Activated T-helper 2 cell treated with anti-CD3 and anti-CD28 coated beads, Interferon-gamma antibody, Interleukin-2, Interleukin-4, amounts not matched to agents 10 μg/mL and 5 μg/mL and 100 μg/mL, durations not matched to agents 14 hours and 24 hours and 36 hours (primary cell): ENCODE measurements at regions of chr6 and their contacts with region 1.

Region 1: GRCh38 chr6:158026054-158026900 is 44.6 kb downstream of the SYNJ2 start:
- DNase-seq: peak; percentile 71
- H3K4me3 Mint-ChIP-seq: peak overlapping the region; percentile 74
- H3K27ac Mint-ChIP-seq: peak overlapping the region; percentile 99
- H3K4me1 Mint-ChIP-seq: peaks cover 28% of the 10 kb centered on the region
- H3K27me3 Mint-ChIP-seq: no peaks in the 10 kb centered on the region

Region 2: DNA sequence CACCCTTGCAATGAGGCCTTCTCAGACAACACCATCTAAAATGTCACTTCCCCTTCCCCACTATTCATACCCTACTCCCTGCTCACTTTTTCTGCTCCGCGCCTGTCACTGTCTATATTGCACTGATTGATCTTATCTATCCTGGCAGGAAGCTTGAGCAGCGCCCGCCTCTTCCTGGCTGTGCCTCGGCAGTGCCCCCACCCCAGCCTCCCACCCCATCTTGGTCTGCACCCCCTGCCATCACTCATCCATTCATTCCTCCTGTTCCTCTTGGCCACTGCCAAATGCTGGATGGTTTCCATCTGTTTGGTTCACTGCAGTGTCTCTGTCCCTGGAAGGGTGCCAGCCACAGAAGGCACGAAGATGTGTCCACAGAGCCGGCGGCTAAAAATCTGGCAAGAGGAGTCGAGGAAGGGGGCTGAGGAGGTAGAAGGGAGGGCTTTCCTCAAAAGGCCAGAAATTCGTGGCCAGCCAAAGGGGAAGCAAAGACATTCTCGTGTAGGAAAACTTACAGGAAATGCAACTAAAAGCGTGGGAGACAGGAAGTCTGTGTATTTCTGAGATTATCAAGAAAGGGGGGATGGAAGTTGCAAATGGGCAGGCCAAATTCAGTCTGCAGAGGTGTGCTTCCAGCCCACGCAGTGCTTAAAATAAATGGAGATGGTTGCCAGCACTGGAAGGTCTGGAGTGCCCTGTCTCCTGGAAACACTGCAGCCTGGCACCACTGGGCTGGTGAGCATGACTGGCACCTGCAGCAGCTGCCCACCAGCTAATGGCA is 17.0 kb before region 1 on chr6:
- intact Hi-C with region 1: loop called (anchors 2 kb)
- DNase-seq: no peak
- H3K4me3 Mint-ChIP-seq: peak overlapping the region; percentile 20
- H3K27ac Mint-ChIP-seq: peak overlapping the region; percentile 61
- H3K4me1 Mint-ChIP-seq: peaks cover 56% of the 10 kb centered on the region
- H3K27me3 Mint-ChIP-seq: no peaks in the 10 kb centered on the region

Region 3: DNA sequence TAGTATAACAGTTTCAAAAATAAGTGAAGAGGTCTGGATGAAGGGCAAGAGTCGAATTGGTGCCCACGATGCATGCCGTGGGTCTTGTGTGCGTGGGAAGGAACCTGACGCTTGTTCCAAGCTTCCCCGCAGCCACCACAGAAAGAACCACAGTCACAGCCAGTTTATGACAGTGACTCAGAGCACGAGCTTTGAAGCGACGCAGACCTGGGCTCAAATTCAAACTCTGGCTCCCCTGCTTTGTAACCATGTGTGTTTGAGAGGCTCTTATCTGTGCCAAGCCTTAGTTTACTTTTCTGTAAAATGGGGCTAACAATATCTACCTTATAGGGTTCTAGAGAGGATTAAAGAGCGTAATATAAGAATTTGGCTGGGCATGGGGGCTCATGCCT is 20.8 kb after region 1 on chr6:
- intact Hi-C with region 1: loop called (anchors 2 kb)
- DNase-seq: peak; percentile 40
- H3K4me3 Mint-ChIP-seq: peak overlapping the region; percentile 34
- H3K27ac Mint-ChIP-seq: peak overlapping the region; percentile 84
- H3K4me1 Mint-ChIP-seq: peaks cover 18% of the 10 kb centered on the region
- H3K27me3 Mint-ChIP-seq: no peaks in the 10 kb centered on the region

Region 4: GRCh38 chr6:158072083-158072721 is 45.9 kb after region 1 on chr6:
- intact Hi-C with region 1: no loop called
- DNase-seq: peak; percentile 46
- H3K4me3 Mint-ChIP-seq: no peak overlapping the region
- H3K27ac Mint-ChIP-seq: no peak overlapping the region
- H3K4me1 Mint-ChIP-seq: peaks cover 19% of the 10 kb centered on the region
- H3K27me3 Mint-ChIP-seq: no peaks in the 10 kb centered on the region